ENCODE measurements at regions of chr12 and their contacts with region 1.

Region 1: GRCh38 chr12:27861428-27862167 is 81.6 kb upstream of the MANSC4 start:
- DNase-seq: peak; percentile 78
- H3K4me3 ChIP-seq: no peak overlapping the region
- H3K27ac ChIP-seq: peak overlapping the region; percentile 67
- H3K4me1 ChIP-seq: peaks cover 13% of the 10 kb centered on the region
- CTCF ChIP-seq: no peak

Region 2: GRCh38 chr12:27840244-27840999 is 21.2 kb before region 1 on chr12:
- CTCF ChIA-PET with region 1: no interaction called
- POLR2A ChIA-PET with region 1: interaction called, 5 read pairs
- intact Hi-C with region 1: loop called (anchors 2 kb)
- DNase-seq: peak; percentile 8
- H3K4me3 ChIP-seq: no peak overlapping the region
- H3K27ac ChIP-seq: no peak overlapping the region
- H3K4me1 ChIP-seq: peaks cover 4% of the 10 kb centered on the region
- CTCF ChIP-seq: peak; percentile 59

Measured in OCI-LY7 (cell line).